Naive thymus-derived CD4-positive, alpha-beta T cell (primary cell): ENCODE measurements at regions of chr1 and their contacts with region 1.

Region 1: DNA sequence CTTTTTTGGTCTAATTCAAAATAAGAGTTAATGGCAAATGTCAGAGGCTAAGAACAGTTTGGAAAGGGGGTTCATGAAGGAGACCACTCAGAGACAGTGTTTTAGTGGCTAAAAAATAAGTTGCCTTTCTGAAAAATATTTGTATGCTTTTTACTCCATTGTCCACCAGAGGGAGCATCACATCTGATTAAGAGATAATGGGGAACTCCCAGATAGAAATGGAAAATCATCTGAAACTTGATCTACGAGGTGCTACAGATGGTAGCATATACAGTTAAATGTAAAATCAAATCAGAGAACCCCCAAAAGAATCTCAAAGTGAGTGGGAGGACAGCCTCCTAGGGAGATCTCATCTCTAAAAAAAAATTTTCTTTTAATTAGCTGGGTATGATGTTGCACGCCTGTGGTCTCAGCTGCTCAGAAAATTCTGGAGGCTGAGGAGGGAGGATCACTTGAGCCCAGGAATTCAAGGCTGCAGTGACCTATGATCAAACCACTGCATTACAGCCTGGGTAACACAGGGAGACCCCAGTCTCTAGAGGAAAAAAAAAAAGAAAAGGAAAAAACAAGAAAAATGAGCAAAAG is 9.7 kb downstream of the SMYD3 start:
- DNase-seq: peak in 7 of 9 donors; percentile 46 to 74 (median 65)
- ATAC-seq: peak; percentile 86
- H3K4me3 ChIP-seq: no peak overlapping the region
- H3K4me3 Mint-ChIP-seq: no peak overlapping the region
- H3K27ac ChIP-seq: no peak overlapping the region
- H3K27ac Mint-ChIP-seq: peak overlapping the region in 4 of 9 donors; percentile 33 to 74 (median 49)
- H3K4me1 ChIP-seq: peaks cover 0 to 4% of the 10 kb centered on the region in 2 donors
- H3K4me1 Mint-ChIP-seq: peaks cover 7 to 25% (median 21%) of the 10 kb centered on the region in 7 donors
- H3K27me3 ChIP-seq: no peaks in the 10 kb centered on the region
- H3K27me3 Mint-ChIP-seq: no peaks in the 10 kb centered on the region

Region 2: DNA sequence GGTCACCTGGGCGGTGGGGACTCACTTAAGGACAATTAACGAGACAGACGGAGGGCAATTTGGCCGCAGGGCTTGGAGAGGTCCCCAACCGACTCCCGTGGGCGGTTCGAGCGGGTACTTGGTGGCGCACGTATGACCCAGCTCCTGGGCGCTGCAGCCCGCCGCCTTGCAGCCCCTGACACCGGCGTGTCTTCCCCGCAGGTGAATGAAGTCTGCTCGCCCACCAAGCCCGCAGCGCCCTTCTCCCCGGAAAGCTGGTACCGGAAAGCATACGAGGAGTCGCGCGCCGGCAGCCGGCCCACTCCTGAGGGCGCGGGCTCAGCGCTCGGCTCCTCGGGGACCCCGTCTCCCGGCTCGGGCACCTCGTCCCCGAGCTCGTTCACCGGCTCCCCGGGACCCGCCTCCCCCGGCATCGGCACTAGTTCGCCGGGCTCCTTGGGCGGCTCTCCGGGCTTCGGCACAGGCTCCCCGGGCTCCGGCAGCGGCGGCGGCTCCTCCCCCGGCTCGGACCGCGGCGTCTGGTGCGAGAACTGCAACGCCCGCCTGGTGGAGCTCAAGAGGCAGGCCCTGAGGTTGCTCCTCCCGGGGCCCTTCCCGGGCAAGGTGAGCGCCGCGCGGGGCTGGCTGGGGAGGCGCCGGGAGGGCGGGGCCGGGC is 1341.2 kb before region 1 on chr1:
- CTCF ChIA-PET with region 1: interaction called, 3 read pairs
- POLR2A ChIA-PET with region 1: no interaction called
- intact Hi-C with region 1: loop called (anchors 1 to 2 kb)
- DNase-seq: peak; percentile 28 to 83 (median 58)
- ATAC-seq: peak; percentile 93
- H3K4me3 ChIP-seq: peak overlapping the region; percentile 52
- H3K4me3 Mint-ChIP-seq: peak overlapping the region; percentile 76 to 88 (median 83)
- H3K27ac ChIP-seq: no peak overlapping the region
- H3K27ac Mint-ChIP-seq: peak overlapping the region in 1 of 9 donors; percentile 29
- H3K4me1 ChIP-seq: peaks cover 15 to 20% of the 10 kb centered on the region in 2 donors
- H3K4me1 Mint-ChIP-seq: peaks cover 0 to 28% (median 26%) of the 10 kb centered on the region in 7 donors
- H3K27me3 ChIP-seq: peaks cover 3 to 13% of the 10 kb centered on the region in 2 donors
- H3K27me3 Mint-ChIP-seq: peaks cover 53 to 71% (median 67%) of the 10 kb centered on the region in 5 donors

Region 3: GRCh38 chr1:246117066-246117791 is 380.2 kb before region 1 on chr1:
- CTCF ChIA-PET with region 1: no interaction called
- POLR2A ChIA-PET with region 1: no interaction called
- intact Hi-C with region 1: loop called in 1 of 2 experiments (anchors 1 kb)
- DNase-seq: peak in 7 of 9 donors; percentile 66 to 89 (median 83)
- ATAC-seq: peak; percentile 94
- H3K4me3 ChIP-seq: peak overlapping the region; percentile 34
- H3K4me3 Mint-ChIP-seq: peak overlapping the region; percentile 23 to 92 (median 68)
- H3K27ac ChIP-seq: peak overlapping the region; percentile 69
- H3K27ac Mint-ChIP-seq: peak overlapping the region; percentile 11 to 95 (median 87)
- H3K4me1 ChIP-seq: peaks cover 6 to 9% of the 10 kb centered on the region in 2 donors
- H3K4me1 Mint-ChIP-seq: peaks cover 13 to 50% (median 38%) of the 10 kb centered on the region in 7 donors
- H3K27me3 ChIP-seq: no peaks in the 10 kb centered on the region
- H3K27me3 Mint-ChIP-seq: no peaks in the 10 kb centered on the region

Region 4: DNA sequence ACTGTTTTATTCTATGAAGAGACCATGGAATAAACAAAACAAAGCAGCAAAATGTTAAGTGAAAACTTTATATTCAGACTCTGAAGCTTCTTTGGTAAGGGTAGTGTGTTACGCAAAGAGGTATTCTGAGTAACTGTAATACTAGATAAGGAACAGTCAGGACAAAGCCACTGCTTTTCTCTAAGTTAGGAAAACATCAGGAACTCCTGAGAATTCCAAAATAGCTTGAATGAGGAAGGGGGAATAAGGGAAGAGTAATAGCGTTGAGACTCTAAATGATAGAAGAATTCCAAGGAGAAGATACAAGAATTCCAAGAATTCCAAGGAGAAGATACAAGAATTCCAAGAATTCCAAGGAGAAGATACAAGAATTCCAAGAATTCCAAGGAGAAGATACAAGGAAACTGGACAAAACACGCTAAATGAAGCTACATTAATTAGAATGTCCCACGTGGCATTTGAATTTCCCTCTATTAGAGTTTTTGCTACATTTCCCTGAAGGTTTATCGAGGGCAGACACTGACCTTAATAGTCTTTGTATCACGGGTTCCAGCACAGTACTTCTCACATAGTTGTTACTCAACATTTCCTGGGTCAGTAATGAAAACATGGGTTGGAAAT is 61.9 kb before region 1 on chr1:
- CTCF ChIA-PET with region 1: no interaction called
- POLR2A ChIA-PET with region 1: no interaction called
- intact Hi-C with region 1: no loop called
- DNase-seq: no peak
- ATAC-seq: no peak
- H3K4me3 ChIP-seq: no peak overlapping the region
- H3K4me3 Mint-ChIP-seq: no peak overlapping the region
- H3K27ac ChIP-seq: no peak overlapping the region
- H3K27ac Mint-ChIP-seq: no peak overlapping the region
- H3K4me1 ChIP-seq: no peaks in the 10 kb centered on the region
- H3K4me1 Mint-ChIP-seq: peaks cover 0 to 12% (median 6%) of the 10 kb centered on the region in 7 donors
- H3K27me3 ChIP-seq: no peaks in the 10 kb centered on the region
- H3K27me3 Mint-ChIP-seq: no peaks in the 10 kb centered on the region

Region 5: DNA sequence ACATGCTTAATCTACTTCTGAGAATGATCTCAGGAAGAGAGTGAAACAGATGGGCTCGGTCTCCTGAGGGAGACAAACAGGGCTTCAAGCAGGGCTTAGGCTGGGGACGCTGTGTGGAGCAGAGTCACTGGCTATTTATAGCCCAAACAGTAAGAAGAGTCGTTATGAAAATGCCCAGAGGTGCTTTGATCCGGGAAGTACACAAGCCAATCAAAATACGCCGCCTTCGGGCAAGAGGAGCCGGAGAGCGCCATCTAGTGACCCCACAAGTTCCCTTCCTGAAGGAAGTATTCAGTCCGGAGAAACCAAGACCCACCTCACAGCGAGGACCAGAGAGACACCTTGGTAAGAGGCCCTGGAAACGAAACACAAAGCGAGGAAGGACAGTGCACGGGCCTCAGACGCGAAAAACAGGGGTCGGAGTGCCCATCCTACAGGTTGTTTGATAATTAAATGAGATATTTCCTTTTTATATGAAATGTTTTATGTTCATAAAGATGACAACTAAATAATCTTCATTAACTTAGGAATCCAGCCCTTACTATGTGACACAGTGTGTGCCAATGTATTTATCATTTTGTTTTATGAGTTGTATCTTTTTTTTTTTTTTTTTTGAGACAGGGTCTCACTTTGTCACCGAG is 201.8 kb after region 1 on chr1:
- CTCF ChIA-PET with region 1: interaction called, 5 read pairs
- POLR2A ChIA-PET with region 1: no interaction called
- intact Hi-C with region 1: loop called (anchors 1 kb)
- DNase-seq: peak; percentile 48 to 81 (median 74)
- ATAC-seq: peak; percentile 98
- H3K4me3 ChIP-seq: peak overlapping the region; percentile 26
- H3K4me3 Mint-ChIP-seq: peak overlapping the region; percentile 30 to 76 (median 70)
- H3K27ac ChIP-seq: no peak overlapping the region
- H3K27ac Mint-ChIP-seq: peak overlapping the region in 2 of 9 donors; percentile 13 to 39
- H3K4me1 ChIP-seq: no peaks in the 10 kb centered on the region
- H3K4me1 Mint-ChIP-seq: peaks cover 0 to 11% (median 7%) of the 10 kb centered on the region in 7 donors
- H3K27me3 ChIP-seq: no peaks in the 10 kb centered on the region
- H3K27me3 Mint-ChIP-seq: peaks cover 0 to 10% (median 0%) of the 10 kb centered on the region in 5 donors

Region 6: DNA sequence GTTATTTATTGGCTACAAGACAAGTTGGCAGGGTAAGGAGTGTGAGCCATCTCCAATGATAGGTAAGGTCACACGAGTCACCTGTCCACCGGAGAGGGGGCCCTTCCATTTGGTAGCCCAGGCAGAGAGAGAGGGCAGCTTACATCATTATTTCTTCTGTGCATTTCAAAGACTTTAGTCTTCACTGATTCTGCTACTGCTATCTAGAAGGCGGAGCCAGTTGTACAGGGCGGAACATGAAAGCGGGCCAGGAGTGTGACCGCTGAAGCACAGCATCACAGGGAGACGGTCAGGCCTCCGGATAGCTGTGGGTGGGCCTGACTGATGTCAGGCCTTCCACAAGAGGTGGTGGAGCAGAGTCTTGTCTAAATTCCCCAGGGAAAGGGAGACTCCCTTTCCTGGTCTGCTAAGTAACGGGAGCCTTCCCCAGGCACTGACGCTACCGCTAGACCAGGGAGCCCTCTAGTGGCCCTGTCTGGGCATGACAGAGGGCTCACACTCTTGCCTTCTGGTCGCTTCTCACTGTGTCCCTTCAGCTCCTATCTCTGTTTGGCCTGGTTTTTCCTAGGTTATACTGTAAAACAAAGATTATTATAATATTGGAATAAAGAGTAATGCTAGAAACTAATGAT is 473.8 kb after region 1 on chr1:
- CTCF ChIA-PET with region 1: no interaction called
- POLR2A ChIA-PET with region 1: no interaction called
- intact Hi-C with region 1: loop called in 1 of 2 experiments (anchors 1 kb)
- DNase-seq: peak in 7 of 9 donors; percentile 13 to 57 (median 16)
- ATAC-seq: no peak
- H3K4me3 ChIP-seq: no peak overlapping the region
- H3K4me3 Mint-ChIP-seq: peak overlapping the region in 1 of 10 donors; percentile 34
- H3K27ac ChIP-seq: no peak overlapping the region
- H3K27ac Mint-ChIP-seq: peak overlapping the region in 1 of 9 donors; percentile 41
- H3K4me1 ChIP-seq: no peaks in the 10 kb centered on the region
- H3K4me1 Mint-ChIP-seq: peaks cover 0 to 3% (median 0%) of the 10 kb centered on the region in 7 donors
- H3K27me3 ChIP-seq: no peaks in the 10 kb centered on the region
- H3K27me3 Mint-ChIP-seq: peaks cover 0 to 11% (median 0%) of the 10 kb centered on the region in 5 donors